ENCODE measurements at regions of chr12 and their contacts with region 1.

Region 1: DNA sequence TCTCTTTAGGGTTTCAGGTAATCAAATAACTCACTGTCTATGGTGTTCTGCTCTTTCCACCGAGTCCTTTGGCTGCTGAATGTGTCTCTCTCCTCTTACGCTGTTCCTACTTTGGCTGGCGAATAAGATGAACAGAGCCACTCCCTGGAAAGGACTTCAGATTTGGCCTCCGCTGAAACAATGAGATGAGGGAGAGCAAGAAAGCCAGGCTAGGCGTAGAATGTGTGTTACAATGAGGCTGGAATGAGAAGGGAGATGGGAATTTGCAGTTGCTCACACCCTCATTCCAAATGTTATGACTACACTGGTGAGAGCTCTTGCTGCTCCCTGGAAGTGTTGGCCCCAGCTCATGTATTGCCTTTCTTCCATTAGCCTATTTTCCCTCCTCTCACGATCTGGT is at the start of gene MFAP5:
- DNase-seq: no peak
- H3K4me3 Mint-ChIP-seq: no peak within 1 kb of the TSS
- H3K27ac Mint-ChIP-seq: no peak within 1 kb of the TSS
- H3K4me1 Mint-ChIP-seq: peaks cover 5% of the 10 kb centered on the region
- H3K27me3 Mint-ChIP-seq: no peaks in the 10 kb centered on the region
- CTCF ChIP-seq: no peak
- total RNA-seq, gene MFAP5: 0.64 and 1.6 TPM in 2 replicates

Region 2: DNA sequence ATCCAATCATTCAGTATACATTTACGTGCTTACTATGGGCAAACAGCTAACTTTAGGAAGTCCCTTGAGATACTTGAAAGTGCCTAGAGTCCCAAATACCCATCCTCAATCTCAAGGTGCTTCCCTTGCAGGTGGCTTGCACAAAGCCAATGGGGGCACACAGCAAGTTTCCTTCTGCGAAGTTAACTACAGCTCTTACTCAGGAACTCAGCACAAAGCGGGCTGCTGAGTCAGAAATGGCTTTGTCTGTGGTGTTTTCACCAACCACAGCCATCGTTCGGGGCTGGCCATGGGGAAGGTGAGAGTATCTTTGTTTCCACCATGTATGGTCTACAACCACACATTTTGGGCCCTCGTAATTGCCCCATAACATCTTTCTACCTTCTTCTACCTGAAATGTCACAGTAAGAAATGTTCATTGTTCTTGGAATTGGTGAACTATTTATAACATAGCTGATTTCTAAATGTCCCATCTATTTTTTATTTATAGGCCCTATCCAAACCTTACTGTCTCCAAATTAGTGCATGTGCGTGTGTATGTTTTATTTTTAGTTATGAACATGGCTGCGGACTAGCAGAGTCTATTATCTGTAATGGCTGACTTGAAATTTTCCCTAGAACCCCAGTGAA is 13.9 kb before region 1 on chr12:
- CTCF ChIA-PET with region 1: interaction called, 15 read pairs
- POLR2A ChIA-PET with region 1: no interaction called
- intact Hi-C with region 1: no loop called
- DNase-seq: no peak
- H3K4me3 Mint-ChIP-seq: no peak overlapping the region
- H3K27ac Mint-ChIP-seq: no peak overlapping the region
- H3K4me1 Mint-ChIP-seq: peaks cover 10% of the 10 kb centered on the region
- H3K27me3 Mint-ChIP-seq: no peaks in the 10 kb centered on the region
- CTCF ChIP-seq: no peak

Region 3: DNA sequence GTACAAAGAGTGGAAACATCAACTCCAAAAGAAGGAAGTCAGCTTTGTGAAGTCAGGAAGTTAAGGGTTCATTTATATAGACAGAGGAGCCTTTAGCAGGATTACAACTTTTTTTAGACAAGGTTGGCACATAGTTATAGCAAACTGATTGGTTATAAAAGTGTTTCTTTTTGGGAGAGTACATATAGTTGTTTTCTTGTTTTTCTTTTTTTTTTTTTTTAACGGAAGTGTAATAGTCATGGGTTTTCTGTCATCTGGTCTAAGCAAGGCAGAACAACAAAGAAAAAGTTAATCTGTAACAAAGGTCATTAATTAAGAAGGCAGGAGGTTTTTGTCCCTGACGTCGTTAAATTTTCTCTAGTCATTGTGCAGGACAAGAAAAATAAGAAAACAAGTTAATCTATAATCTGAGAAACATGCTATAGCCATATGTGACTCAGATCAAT is 13.0 kb after region 1 on chr12:
- CTCF ChIA-PET with region 1: interaction called, 22 read pairs
- POLR2A ChIA-PET with region 1: interaction called, 4 read pairs
- intact Hi-C with region 1: no loop called
- DNase-seq: no peak
- H3K4me3 Mint-ChIP-seq: no peak overlapping the region
- H3K27ac Mint-ChIP-seq: no peak overlapping the region
- H3K4me1 Mint-ChIP-seq: peaks cover 6% of the 10 kb centered on the region
- H3K27me3 Mint-ChIP-seq: no peaks in the 10 kb centered on the region
- CTCF ChIP-seq: no peak

Region 4: DNA sequence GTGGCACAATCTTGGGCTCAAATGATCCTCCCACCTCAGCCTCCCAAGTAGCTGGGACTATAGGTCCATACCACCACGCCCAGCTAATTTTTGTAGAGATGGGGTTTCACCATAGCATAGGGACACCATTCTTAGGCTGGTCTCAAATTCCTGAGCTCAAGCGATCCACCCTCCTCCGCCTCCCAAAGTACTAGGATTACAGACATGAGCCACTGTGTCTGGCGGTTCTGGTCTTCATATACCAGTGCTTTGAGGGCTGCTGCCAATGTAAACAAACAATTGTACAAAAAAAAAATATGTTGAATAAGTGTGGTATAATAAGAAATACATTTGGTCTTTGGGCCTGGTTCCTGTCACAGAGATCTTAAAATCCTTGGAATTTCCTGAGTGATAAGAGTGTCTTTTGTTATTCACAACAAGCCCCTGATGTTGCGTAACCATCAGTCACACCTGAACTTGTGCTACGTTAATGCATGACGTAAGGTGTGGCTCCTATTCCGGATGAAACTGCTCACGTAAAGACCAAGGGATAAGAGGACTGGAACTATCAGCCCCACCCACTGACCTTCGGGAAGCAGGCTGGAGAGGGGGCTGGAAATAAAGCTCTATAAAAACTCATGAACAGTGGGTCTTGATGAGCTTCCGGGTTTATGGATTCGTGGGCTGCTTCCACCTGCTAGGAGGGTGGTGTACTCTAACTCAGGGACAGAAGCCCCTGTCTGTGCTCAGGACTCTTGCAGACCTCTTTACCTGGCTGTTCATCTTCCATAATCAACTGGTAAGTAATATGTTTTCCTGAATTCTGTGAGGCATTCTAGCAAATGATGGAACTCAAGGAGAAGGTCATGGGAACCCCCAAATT is 18.7 kb after region 1 on chr12:
- CTCF ChIA-PET with region 1: interaction called, 22 read pairs
- POLR2A ChIA-PET with region 1: interaction called, 4 read pairs
- intact Hi-C with region 1: no loop called
- DNase-seq: peak; percentile 79
- H3K4me3 Mint-ChIP-seq: peak overlapping the region; percentile 67
- H3K27ac Mint-ChIP-seq: peak overlapping the region; percentile 63
- H3K4me1 Mint-ChIP-seq: peaks cover 19% of the 10 kb centered on the region
- H3K27me3 Mint-ChIP-seq: no peaks in the 10 kb centered on the region
- CTCF ChIP-seq: no peak

Region 5: DNA sequence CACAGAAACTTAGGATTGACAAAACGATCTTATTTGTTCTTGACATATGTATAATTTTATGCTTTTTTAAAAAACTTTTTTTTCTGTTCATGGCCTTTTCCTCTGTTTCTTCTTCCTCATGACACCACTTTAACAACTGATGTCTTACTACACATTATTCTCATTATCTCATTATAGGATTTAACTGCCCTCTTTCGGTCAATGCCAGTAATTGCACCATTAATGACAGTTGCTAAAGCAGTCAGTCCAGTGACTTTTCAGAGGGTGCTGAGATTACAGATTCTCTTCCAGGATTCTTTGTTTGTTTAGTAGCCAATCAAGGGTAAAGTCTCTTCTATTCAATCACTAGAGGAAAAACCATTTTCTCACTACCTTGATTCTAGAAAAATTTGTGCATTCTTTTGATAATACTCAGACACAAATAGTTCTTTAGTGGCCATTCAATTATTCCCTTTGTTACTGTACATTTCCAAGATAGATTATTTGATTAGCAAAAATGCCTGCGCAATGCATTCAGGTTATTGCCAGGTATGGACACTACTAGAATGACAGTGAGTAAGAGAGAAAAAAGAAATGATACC is 376.9 kb after region 1 on chr12:
- CTCF ChIA-PET with region 1: interaction called, 15 read pairs
- POLR2A ChIA-PET with region 1: no interaction called
- intact Hi-C with region 1: loop called (anchors 1 kb)
- DNase-seq: peak; percentile 57
- H3K4me3 Mint-ChIP-seq: no peak overlapping the region
- H3K27ac Mint-ChIP-seq: no peak overlapping the region
- H3K4me1 Mint-ChIP-seq: no peaks in the 10 kb centered on the region
- H3K27me3 Mint-ChIP-seq: no peaks in the 10 kb centered on the region
- CTCF ChIP-seq: peak; percentile 78

Measured in MCF 10A (cell line).